OCI-LY7 (cell line): ENCODE measurements at regions of chr1 and their contacts with region 1.

Region 1: DNA sequence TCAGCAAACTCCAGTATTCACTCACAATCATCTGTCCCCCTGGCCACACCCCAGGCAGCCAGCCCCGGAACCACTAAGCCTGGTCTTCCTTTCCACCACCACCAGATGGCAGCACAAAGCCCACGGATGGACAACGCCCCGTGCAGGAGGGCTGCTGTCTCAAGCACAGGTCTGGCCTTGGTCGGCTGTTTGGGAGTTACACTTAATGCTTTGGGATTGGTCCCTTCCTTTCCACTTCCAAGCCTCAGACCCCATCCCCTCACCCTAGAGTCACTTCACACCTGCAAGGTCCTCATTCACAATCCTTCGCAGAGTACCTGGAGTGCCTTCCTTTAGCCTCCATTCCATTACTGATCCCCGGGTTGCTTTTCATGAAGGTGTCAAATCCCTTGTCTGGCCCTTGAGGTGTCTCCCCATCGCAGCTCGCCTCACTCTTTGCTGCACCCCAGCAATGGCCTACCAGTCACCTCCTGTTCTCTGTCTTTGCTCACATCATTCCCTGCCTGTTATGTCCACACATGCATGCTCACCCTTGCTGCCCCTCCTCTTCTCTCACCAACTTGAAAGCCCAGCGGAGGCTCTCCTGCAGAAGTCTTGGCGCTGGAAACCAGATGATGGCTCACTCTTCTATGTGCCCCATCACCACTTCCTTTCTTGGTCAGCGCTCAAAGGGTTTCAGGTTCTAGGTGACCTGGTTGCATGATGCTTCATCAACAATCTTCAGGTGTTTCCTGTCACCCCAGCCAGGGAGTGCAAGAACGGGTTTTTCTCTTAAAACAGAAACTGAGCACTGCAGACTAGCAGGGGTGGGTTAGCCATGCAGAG is 24.9 kb upstream of the KCNA2 start:
- DNase-seq: peak; percentile 91
- H3K4me3 ChIP-seq: peak overlapping the region; percentile 32
- H3K27ac ChIP-seq: peak overlapping the region; percentile 86
- H3K4me1 ChIP-seq: peaks cover 79% of the 10 kb centered on the region
- CTCF ChIP-seq: peak; percentile 92

Region 2: GRCh38 chr1:110292031-110292741 is 338.9 kb before region 1 on chr1:
- CTCF ChIA-PET with region 1: no interaction called
- POLR2A ChIA-PET with region 1: no interaction called
- intact Hi-C with region 1: no loop called
- DNase-seq: no peak
- H3K4me3 ChIP-seq: no peak overlapping the region
- H3K27ac ChIP-seq: no peak overlapping the region
- H3K4me1 ChIP-seq: no peaks in the 10 kb centered on the region
- CTCF ChIP-seq: no peak

Region 3: GRCh38 chr1:110565565-110565964 is 65.5 kb before region 1 on chr1:
- CTCF ChIA-PET with region 1: no interaction called
- POLR2A ChIA-PET with region 1: no interaction called
- intact Hi-C with region 1: no loop called
- DNase-seq: no peak
- H3K4me3 ChIP-seq: no peak overlapping the region
- H3K27ac ChIP-seq: no peak overlapping the region
- H3K4me1 ChIP-seq: no peaks in the 10 kb centered on the region
- CTCF ChIP-seq: no peak

Region 4: GRCh38 chr1:110619412-110620249 is 11.4 kb before region 1 on chr1:
- CTCF ChIA-PET with region 1: interaction called, 7 read pairs
- POLR2A ChIA-PET with region 1: interaction called, 7 read pairs
- intact Hi-C with region 1: loop called (anchors 1 kb)
- DNase-seq: peak; percentile 90
- H3K4me3 ChIP-seq: peak overlapping the region; percentile 64
- H3K27ac ChIP-seq: no peak overlapping the region
- H3K4me1 ChIP-seq: peaks cover 29% of the 10 kb centered on the region
- CTCF ChIP-seq: peak; percentile 98

Region 5: GRCh38 chr1:110645821-110646735 is 15.0 kb after region 1 on chr1:
- CTCF ChIA-PET with region 1: no interaction called
- POLR2A ChIA-PET with region 1: interaction called, 86 read pairs
- intact Hi-C with region 1: no loop called
- DNase-seq: no peak
- H3K4me3 ChIP-seq: no peak overlapping the region
- H3K27ac ChIP-seq: no peak overlapping the region
- H3K4me1 ChIP-seq: peaks cover 31% of the 10 kb centered on the region
- CTCF ChIP-seq: no peak

Region 6: GRCh38 chr1:110668549-110668948 is 37.5 kb after region 1 on chr1:
- CTCF ChIA-PET with region 1: interaction called, 7 read pairs
- POLR2A ChIA-PET with region 1: interaction called, 56 read pairs
- intact Hi-C with region 1: loop called (anchors 1 kb)
- DNase-seq: no peak
- H3K4me3 ChIP-seq: peak overlapping the region; percentile 84
- H3K27ac ChIP-seq: no peak overlapping the region
- H3K4me1 ChIP-seq: peaks cover 37% of the 10 kb centered on the region
- CTCF ChIP-seq: no peak

Region 7: GRCh38 chr1:110766025-110766647 is 135.1 kb after region 1 on chr1:
- CTCF ChIA-PET with region 1: interaction called, 5 read pairs
- POLR2A ChIA-PET with region 1: interaction called, 10 read pairs
- intact Hi-C with region 1: loop called (anchors 1 kb)
- DNase-seq: peak; percentile 82
- H3K4me3 ChIP-seq: peak overlapping the region; percentile 24
- H3K27ac ChIP-seq: no peak overlapping the region
- H3K4me1 ChIP-seq: peaks cover 14% of the 10 kb centered on the region
- CTCF ChIP-seq: peak; percentile 99

Region 8: GRCh38 chr1:110787328-110788071 is 156.4 kb after region 1 on chr1:
- CTCF ChIA-PET with region 1: no interaction called
- POLR2A ChIA-PET with region 1: interaction called, 8 read pairs
- intact Hi-C with region 1: loop called (anchors 1 kb)
- DNase-seq: peak; percentile 82
- H3K4me3 ChIP-seq: peak overlapping the region; percentile 47
- H3K27ac ChIP-seq: peak overlapping the region; percentile 80
- H3K4me1 ChIP-seq: peaks cover 30% of the 10 kb centered on the region
- CTCF ChIP-seq: peak; percentile 37; the same call in 1 of the 2 replicates